ENCODE measurements at regions of chr1 and their contacts with region 1.

Region 1: DNA sequence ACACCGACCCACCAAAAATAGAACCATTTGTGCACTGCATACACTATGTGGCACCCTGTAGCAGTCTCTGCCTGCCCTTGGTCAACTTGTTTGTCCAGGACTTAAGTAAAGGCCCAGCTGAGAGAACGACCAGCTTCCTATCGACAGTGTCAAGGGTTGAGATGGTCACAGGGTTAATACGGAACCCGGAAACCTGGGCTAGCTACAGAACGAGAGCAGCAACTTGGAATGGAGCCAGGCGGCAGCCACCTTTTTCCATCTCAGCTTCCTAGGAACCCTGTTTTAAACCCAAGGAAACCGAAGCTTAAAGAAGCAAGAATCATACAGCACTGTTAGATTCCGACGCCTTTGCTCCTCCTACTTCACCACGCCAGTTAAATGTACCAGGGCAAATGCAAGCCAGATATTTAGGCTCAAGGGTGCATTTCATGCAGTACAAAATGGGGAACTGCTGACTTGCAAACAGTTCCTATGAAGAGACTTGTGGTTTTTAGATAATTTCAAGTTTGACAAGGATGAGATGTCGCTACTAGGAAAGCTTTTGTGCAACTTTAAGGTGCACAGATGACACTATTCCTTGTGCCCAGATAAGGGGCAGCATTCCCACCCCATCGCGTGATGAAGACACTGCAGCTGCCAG is 35.5 kb downstream of the SLC66A1 start:
- DNase-seq: no peak

Region 2: DNA sequence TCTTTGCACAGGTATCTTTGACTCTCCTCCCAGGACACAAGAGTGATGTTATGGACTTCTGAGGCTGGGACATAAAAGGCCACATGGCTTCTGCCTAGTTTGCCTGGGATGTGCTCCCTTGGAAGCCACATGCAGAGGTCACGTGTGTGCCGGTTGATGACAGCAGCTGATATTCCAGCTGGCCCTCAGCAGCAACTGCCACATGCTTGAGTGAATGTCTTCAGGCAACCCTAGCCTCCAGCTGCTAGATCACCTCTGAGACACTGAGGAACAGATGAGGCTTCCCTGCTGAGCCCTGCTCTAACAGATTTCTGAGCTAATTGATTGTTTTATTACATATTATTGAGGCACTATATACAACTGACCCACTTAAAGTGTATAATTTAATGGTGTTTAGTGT is 47.4 kb before region 1 on chr1:
- intact Hi-C with region 1: loop called in 1 of 2 experiments (anchors 2 kb)
- DNase-seq: no peak

Region 3: DNA sequence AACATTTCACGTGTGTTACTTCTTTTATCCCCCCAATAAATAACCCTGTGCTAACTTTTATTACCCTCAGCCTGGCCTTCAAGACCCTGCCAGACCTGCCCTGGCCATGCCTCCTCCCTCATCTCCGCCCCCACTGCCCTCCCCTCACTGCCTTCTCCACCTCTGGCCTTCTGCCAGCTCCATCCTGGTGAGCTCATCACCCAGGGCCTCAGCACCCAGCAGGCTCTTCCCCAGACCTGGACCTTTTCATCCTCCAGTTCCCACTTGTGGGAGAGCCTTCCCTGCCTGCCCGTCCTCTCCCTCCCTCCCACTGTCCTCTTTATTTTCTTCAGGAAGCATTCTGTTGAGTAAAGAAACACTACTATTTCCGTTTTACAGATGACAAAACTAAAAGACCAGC is 36.5 kb after region 1 on chr1:
- intact Hi-C with region 1: no loop called
- DNase-seq: no peak

Region 4: DNA sequence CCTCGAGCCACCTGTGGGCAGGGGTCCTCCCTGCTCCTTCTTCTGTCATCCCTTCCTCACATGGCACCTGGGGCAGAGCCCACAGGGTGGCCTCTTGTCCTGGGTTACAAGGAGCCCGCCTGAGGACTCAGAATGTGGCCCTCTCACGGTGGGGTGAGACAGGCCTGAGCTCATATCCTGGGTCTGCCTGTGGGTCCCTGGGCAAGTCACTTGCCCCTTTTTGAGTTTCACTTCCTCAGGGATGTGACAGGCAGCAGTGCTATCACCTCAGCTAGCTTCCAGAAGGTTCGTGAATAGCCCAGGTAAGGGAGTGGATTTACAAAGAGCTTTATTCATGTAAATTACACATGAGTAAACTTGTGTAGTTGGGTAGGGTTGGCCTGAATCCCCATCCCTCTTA is 350.5 kb after region 1 on chr1:
- intact Hi-C with region 1: no loop called
- DNase-seq: no peak